ENCODE measurements at regions of chr19 and their contacts with region 1.

Region 1: DNA sequence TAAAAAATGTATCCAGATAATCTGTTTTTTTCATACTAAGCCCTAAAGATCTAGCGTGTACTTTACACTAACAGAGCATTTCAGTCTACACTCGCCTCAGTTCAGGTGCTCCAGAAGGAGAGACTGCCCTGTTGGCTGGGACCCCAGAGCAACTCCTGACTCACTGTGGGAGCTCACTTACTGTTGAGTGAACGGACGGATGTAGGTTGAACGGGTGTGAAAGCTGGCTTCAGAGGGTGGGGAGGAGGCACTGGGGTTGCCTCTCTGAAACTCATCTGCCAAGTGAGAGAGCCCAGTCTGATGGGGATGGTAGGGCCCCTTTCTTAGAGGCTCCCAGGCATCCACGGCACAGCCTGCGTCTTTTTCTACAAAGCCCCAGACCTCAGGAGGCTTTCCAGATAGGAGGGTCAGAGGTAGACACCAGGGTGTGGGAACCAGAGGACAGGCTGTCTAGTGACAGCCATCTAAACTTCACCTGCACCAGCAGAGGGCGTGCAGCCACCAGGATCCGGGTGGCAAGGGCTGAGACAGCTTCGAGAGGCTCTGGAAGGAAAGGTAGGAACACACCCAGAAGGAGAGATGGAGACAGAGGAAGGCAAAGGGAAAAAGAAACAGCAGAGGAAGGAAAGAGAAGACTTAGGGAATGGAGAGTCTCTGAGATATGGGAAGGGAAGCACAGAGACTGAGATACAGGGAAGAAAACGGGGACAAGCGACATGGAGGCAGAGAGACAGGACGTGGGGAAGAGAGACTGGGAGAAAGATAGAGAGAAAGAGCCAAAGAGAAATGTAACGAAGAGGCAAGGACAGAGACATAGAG is 3.7 kb downstream of the KASH5 start:
- DNase-seq: peak; percentile 87 to 92 (median 89)
- ATAC-seq: peak; percentile 95
- H3K4me3 ChIP-seq: no peak overlapping the region
- H3K27ac ChIP-seq: 0 out of 3 replicates have a peak overlapping the region, but pooled peaks have one; percentile 19
- H3K4me1 ChIP-seq: peaks cover 7 to 45% of the 10 kb centered on the region in 2 experiments; a peak in 4 of 5 replicates
- H3K27me3 ChIP-seq: no peaks in the 10 kb centered on the region
- CTCF ChIP-seq: peak; percentile 95 to 97 (median 97)
- EP300 ChIP-seq: no peak
- POLR2A ChIP-seq: no peak
- RAD21 ChIP-seq: peak; percentile 97 to 99

Region 2: GRCh38 chr19:49430678-49431329 is 39.0 kb after region 1 on chr19:
- CTCF ChIA-PET with region 1: no interaction called
- POLR2A ChIA-PET with region 1: no interaction called
- in situ Hi-C with region 1: loop called (anchors 5 kb)
- intact Hi-C with region 1: loop called (anchors 2 kb)
- DNase-seq: peak; percentile 53 to 74 (median 58)
- ATAC-seq: peak; percentile 50
- H3K4me3 ChIP-seq: peak overlapping the region; percentile 50
- H3K27ac ChIP-seq: peak overlapping the region; percentile 75
- H3K4me1 ChIP-seq: peaks cover 35 to 82% of the 10 kb centered on the region in 2 experiments
- H3K27me3 ChIP-seq: no peaks in the 10 kb centered on the region
- CTCF ChIP-seq: peak; percentile 63 to 79 (median 65)
- EP300 ChIP-seq: no peak
- POLR2A ChIP-seq: no peak
- RAD21 ChIP-seq: peak; percentile 36 to 64

Region 3: DNA sequence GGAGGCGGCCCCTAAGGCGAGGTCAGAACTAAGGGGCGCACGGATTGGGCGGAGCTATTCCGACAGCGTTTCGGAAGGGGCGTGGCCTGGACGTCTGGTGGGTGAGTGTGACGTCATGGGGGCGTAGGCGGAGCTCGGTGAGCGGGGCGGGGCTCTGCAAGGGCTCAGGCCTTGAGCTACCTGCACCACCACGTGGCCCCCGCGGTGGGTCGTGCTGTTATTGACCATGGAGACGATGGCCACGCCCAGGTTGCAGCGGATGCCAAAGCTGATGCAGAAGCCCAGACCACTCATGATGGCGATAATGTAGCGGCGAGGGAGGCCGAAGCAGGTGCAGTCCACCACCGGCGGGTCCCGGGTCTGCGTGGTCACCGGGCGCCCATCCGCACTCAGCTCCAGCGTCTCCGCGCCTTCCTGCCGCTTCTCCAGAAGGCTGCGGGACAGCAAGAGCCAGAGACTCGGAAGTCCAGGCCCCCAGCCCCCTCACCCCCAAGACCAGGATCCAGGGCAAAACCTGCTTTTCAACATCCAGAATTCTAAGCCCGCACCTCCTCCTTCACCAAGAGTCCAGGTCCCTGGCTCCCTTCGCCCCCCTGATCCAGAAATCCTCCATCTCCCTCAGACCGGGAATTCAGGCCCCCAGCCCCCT is 44.7 kb after region 1 on chr19:
- CTCF ChIA-PET with region 1: no interaction called
- POLR2A ChIA-PET with region 1: no interaction called
- in situ Hi-C with region 1: loop called (anchors 5 kb)
- intact Hi-C with region 1: loop called (anchors 2 kb)
- DNase-seq: peak; percentile 87 to 93 (median 88)
- ATAC-seq: peak; percentile 86
- H3K4me3 ChIP-seq: peak overlapping the region; percentile 22
- H3K27ac ChIP-seq: peak overlapping the region; percentile 60
- H3K4me1 ChIP-seq: peaks cover 29 to 57% of the 10 kb centered on the region in 2 experiments; a peak in 4 of 5 replicates
- H3K27me3 ChIP-seq: peaks cover 7 to 19% of the 10 kb centered on the region in 2 experiments; a peak in 4 of 5 replicates
- CTCF ChIP-seq: peak in 2 of 3 experiments; percentile 9 to 14; a peak in 1 of 6 replicates
- EP300 ChIP-seq: no peak
- POLR2A ChIP-seq: no peak
- RAD21 ChIP-seq: peak in 1 of 2 experiments; percentile 20; a peak in 1 of 4 replicates

Region 4: DNA sequence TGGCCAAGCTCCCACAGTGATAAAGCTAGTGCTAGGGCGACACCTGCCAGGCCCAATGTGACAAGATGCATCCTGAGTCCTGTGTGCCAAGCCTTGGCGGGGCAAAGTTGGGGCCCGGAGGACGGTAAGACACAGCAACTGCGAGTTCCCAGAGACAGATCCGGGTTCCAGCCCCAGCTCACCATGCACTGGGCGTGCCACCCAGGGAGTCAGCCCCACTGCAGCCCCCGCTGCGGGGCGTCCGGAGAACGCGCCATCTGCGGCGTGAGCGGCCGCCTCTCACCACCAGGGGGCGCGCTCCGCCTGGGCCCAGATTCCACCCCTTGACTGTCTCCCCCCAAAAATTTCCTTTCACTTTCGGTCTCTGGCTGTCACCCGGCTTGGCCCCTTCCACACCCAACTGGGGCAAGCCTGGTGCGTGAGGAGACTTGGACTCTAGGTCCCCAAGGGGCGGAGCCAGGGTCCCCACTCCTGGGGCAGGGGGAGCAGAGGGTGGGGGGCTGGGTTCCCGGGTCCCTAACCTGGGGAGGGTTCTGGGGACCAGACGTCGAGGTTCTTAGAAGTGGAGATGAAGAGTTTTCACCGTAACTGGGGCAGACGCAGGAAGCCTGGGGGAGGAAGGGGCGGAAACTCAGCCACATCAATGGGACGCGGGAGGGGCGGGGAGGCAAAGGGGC is 82.2 kb after region 1 on chr19 and contains the start of gene FLT3LG:
- CTCF ChIA-PET with region 1: interaction called, 4 read pairs
- POLR2A ChIA-PET with region 1: no interaction called
- in situ Hi-C with region 1: no loop called
- intact Hi-C with region 1: loop called (anchors 1 kb)
- DNase-seq: peak; percentile 87 to 91 (median 88)
- ATAC-seq: peak; percentile 76
- H3K4me3 ChIP-seq: peak within 1 kb of the TSS; percentile 56
- H3K27ac ChIP-seq: peak within 1 kb of the TSS; percentile 29; the same call in 2 of the 3 replicates
- H3K4me1 ChIP-seq: peaks cover 14 to 52% of the 10 kb centered on the region in 2 experiments
- H3K27me3 ChIP-seq: no peaks in the 10 kb centered on the region
- CTCF ChIP-seq: peak; percentile 94 to 97 (median 96)
- EP300 ChIP-seq: no peak
- POLR2A ChIP-seq: no peak; the same call in 1 of the 2 replicates
- RAD21 ChIP-seq: peak; percentile 62 to 71
- polyA plus RNA-seq, gene FLT3LG: 0.31 to 0.49 TPM